Activated CD4-positive, alpha-beta T cell treated with anti-CD3 and anti-CD28 coated beads for 36 hours (primary cell): ENCODE measurements at regions of chr16 and their contacts with region 1.

Region 1: DNA sequence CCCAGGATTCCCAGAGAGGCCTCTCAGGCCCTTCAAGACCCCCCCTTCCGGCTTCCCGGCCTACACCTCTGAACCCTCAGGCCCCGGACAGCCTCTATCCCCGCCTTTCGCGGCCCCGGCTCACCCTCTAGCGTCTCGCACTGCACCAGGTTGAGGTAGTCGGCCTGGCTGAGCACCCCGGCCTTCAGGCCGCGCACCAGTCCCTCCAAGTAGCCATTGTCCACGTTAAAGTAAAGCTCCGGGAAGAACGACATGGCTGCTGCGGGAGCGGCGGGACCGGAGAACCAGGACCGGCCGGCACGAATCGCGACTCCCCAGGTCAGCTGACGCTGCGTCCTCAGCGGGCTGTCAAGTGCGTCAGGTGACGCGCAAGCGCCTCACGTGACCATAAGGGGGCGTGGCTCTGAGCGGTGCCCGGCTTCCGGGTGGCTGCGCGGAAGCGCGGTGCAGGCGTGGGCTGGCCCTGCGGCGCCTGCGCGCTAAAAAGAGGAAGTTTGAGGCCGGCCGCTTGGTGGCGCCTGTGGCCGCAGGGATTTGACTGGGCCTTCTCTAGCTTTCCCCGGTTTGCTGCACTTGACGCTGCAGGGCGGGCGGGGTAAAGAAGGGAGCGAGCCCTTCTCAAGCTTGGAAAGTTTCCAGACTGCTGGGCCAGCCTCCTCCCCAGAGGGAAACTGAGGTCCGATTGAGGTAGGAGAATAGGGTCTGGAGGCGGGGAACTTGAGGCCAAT is at the start of gene ATP6V0D1:
- DNase-seq: peak; percentile 100
- ATAC-seq: peak; percentile 92
- H3K4me3 Mint-ChIP-seq: peak within 1 kb of the TSS; percentile 97
- H3K27ac Mint-ChIP-seq: peak within 1 kb of the TSS; percentile 98
- H3K4me1 Mint-ChIP-seq: peaks cover 31% of the 10 kb centered on the region
- H3K27me3 Mint-ChIP-seq: no peaks in the 10 kb centered on the region
- total RNA-seq, gene ATP6V0D1: 16.3 to 17.3 TPM

Region 2: DNA sequence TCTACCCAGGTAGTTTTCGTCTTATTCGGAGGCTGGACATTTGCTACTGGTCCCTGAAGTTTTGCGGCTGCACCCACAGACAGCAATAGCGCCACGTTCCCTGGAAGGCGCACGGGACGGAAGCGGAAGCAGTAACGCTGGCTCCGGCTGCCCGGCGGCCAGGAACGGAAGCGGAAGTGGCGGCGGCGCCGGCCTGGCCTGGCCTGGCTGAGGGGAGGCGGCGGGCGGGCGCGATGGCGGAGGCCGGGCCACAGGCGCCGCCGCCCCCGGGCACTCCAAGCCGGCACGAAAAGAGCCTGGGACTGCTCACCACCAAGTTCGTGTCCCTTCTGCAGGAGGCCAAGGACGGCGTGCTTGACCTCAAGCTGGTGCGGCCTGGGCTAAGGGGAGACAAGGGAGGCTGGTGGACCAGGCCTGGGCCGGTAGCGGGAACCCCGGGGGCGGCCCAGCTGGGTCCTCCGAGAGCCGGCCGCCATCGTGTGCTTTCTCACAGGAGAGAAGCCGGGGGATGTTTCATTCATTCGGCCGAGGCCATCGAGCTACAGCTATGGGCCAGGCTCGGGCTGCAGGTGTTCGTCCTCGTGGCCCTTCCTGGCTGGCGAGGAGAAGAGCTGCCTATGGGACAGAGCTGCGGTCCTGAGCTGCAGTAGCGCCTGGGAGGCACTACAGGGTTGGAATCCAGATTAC is 288.9 kb before region 1 on chr16 and contains the start of gene E2F4:
- CTCF ChIA-PET with region 1: no interaction called
- POLR2A ChIA-PET with region 1: no interaction called
- intact Hi-C with region 1: loop called in 1 of 2 experiments (anchors 1 kb)
- DNase-seq: peak; percentile 92
- ATAC-seq: peak; percentile 96
- H3K4me3 Mint-ChIP-seq: peak within 1 kb of the TSS; percentile 93
- H3K27ac Mint-ChIP-seq: peak within 1 kb of the TSS; percentile 93
- H3K4me1 Mint-ChIP-seq: peaks cover 32% of the 10 kb centered on the region
- H3K27me3 Mint-ChIP-seq: no peaks in the 10 kb centered on the region
- total RNA-seq, gene E2F4: 91.4 to 110 TPM

Region 3: GRCh38 chr16:67326472-67327309 is 154.3 kb before region 1 on chr16 and contains the starts of genes KCTD19 and LRRC36:
- CTCF ChIA-PET with region 1: no interaction called
- POLR2A ChIA-PET with region 1: no interaction called
- intact Hi-C with region 1: no loop called
- DNase-seq: peak; percentile 82
- ATAC-seq: peak; percentile 91
- H3K4me3 Mint-ChIP-seq: peak within 1 kb of the TSS; percentile 76
- H3K27ac Mint-ChIP-seq: peak within 1 kb of the TSS; percentile 72
- H3K4me1 Mint-ChIP-seq: peaks cover 7% of the 10 kb centered on the region
- H3K27me3 Mint-ChIP-seq: peaks cover 38% of the 10 kb centered on the region
- total RNA-seq, gene KCTD19: 1.8 to 2.0 TPM
- total RNA-seq, gene LRRC36: 0.51 to 0.66 TPM

Region 4: DNA sequence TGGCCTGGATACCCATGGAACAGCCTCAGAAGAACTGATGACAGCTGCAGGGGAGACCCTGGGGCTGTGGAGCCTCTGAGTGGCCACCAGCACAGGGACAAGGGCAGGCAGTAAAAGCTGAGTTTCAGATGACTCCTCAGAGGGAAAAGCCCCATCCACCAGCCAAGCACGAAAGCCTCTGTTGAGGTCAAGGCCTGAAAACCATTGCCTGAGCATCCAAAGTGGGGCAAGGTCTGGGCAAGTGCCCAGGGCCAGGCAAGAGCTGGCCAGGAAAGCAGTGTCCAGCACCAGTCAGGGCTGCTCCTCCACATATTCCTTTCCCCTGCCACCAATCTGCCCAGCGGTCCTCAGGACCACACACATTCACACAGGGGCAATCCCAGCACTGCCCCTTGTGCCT is 16.4 kb before region 1 on chr16:
- CTCF ChIA-PET with region 1: interaction called, 13 read pairs
- POLR2A ChIA-PET with region 1: no interaction called
- intact Hi-C with region 1: no loop called
- DNase-seq: no peak
- ATAC-seq: no peak
- H3K4me3 Mint-ChIP-seq: no peak overlapping the region
- H3K27ac Mint-ChIP-seq: no peak overlapping the region
- H3K4me1 Mint-ChIP-seq: peaks cover 4% of the 10 kb centered on the region
- H3K27me3 Mint-ChIP-seq: no peaks in the 10 kb centered on the region

Region 5: GRCh38 chr16:67537270-67537635 is 56.3 kb after region 1 on chr16:
- CTCF ChIA-PET with region 1: interaction called, 11 read pairs
- POLR2A ChIA-PET with region 1: no interaction called
- intact Hi-C with region 1: no loop called
- DNase-seq: peak; percentile 74
- ATAC-seq: peak; percentile 62
- H3K4me3 Mint-ChIP-seq: peak overlapping the region; percentile 73
- H3K27ac Mint-ChIP-seq: peak overlapping the region; percentile 58
- H3K4me1 Mint-ChIP-seq: peaks cover 15% of the 10 kb centered on the region
- H3K27me3 Mint-ChIP-seq: peaks cover 6% of the 10 kb centered on the region

Region 6: DNA sequence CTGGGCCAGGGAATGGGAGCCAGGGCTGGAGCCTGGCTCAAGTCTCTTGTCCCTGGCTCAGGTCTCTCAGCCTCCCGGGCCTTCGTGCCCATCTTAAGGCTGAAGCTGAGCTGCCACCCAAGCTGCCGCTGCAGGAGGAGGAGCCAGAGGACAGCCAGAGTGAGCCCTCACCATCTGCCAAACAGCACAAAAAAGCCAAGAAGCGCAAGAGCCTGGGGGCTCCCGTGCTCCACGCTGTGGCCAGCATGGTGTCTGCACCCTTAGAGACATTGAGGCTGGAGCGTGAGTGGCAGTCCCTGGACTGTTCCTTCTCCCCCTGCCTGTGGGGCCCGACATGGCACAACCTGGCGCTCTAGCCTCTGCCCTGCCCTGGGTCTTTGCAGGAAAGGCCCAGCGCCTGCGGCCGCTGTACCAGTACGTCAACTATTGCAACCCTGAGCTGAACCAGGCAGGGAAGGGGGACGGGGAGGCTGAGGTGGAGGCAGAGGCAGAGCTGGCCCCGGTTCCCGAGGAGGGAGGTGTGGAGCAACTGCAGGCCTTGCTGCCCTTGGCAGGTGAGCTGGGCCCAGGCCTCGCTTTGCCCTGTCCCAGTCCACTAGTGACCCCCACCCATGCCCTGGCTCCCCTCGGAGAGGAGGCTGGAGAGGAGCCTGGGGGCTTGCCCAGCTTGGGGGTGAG is 187.0 kb after region 1 on chr16:
- CTCF ChIA-PET with region 1: interaction called, 14 read pairs
- POLR2A ChIA-PET with region 1: no interaction called
- intact Hi-C with region 1: loop called (anchors 1 to 5 kb)
- DNase-seq: peak; percentile 92
- ATAC-seq: peak; percentile 91
- H3K4me3 Mint-ChIP-seq: no peak overlapping the region
- H3K27ac Mint-ChIP-seq: no peak overlapping the region
- H3K4me1 Mint-ChIP-seq: peaks cover 19% of the 10 kb centered on the region
- H3K27me3 Mint-ChIP-seq: no peaks in the 10 kb centered on the region

Region 7: GRCh38 chr16:67872786-67873537 is 392.0 kb after region 1 on chr16 and contains the start of gene EDC4:
- CTCF ChIA-PET with region 1: no interaction called
- POLR2A ChIA-PET with region 1: no interaction called
- intact Hi-C with region 1: loop called in 1 of 2 experiments (anchors 1 kb)
- DNase-seq: peak; percentile 92
- ATAC-seq: peak; percentile 89
- H3K4me3 Mint-ChIP-seq: peak within 1 kb of the TSS; percentile 77
- H3K27ac Mint-ChIP-seq: peak within 1 kb of the TSS; percentile 92
- H3K4me1 Mint-ChIP-seq: peaks cover 30% of the 10 kb centered on the region
- H3K27me3 Mint-ChIP-seq: no peaks in the 10 kb centered on the region
- total RNA-seq, gene EDC4: 92.8 to 96.9 TPM